ENCODE measurements at regions of chr7 and their contacts with region 1.

Region 1: DNA sequence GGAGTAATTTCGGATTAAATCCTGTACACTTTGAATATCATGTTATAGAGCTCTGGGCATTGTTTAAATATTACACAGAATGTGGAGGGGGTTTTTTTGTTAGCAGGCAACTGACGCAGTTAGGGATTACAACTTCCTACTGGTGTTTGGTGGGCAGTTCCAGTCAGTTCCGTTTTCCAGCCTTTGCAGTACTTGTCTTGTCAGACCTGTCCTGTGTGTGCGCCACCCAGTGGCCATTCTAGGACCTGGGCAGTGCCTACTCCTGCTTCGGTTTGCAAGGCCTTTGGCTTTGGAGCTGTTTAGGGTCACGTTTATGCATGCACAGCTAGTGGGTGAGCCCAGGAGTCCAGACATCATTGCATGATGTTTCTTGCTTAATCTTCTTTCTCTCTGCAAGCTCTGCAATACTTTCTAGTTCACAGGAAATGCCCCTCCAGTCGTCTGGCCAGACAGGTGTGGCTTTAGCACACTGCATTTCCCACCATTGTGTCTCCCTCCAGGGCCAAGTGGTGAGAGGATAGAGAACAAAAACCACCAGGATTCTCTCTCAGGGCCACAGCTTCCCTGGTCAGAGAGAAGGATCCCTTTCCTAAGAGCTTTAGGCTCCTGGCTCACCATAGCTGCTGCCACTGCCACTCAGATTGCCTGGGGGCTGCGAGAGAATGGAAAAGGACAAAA is 96.5 kb upstream of the TARP start:
- DNase-seq: peak; percentile 85 to 93
- H3K4me3 ChIP-seq: no peak overlapping the region
- H3K27ac ChIP-seq: no peak overlapping the region
- H3K4me1 ChIP-seq: peaks cover 0 to 6% (median under 1%) of the 10 kb centered on the region in 4 experiments; a peak in 2 of 7 replicates
- H3K27me3 ChIP-seq: no peaks in the 10 kb centered on the region
- CTCF ChIP-seq: peak; percentile 93 to 100 (median 95)
- EP300 ChIP-seq: no peak
- POLR2A ChIP-seq: no peak
- RAD21 ChIP-seq: peak; percentile 28 to 43; a peak in 3 of 4 replicates

Region 2: DNA sequence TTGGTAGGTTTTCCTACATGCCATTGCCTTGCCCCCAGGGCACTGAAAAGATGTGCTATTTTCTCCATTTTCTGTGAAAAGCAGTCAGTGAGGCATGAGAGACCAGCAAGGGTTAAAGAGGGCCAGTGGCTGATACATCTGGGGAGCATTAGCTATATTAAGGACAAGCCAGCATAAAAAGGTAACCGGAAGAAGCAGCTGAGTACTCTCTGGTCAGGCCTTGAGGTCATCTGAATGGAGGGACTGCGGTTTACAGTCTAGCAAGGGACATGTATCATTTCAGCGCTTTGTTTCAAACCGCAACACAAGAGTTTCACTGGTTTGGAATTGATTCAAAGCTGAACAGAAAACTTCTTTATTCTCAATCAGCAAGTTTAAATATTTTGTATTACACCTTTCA is 329.1 kb before region 1 on chr7:
- CTCF ChIA-PET with region 1: no interaction called
- POLR2A ChIA-PET with region 1: no interaction called
- DNase-seq: no peak
- H3K4me3 ChIP-seq: no peak overlapping the region
- H3K27ac ChIP-seq: no peak overlapping the region
- H3K4me1 ChIP-seq: no peaks in the 10 kb centered on the region
- H3K27me3 ChIP-seq: no peaks in the 10 kb centered on the region
- CTCF ChIP-seq: no peak
- EP300 ChIP-seq: no peak
- POLR2A ChIP-seq: no peak
- RAD21 ChIP-seq: no peak

Region 3: DNA sequence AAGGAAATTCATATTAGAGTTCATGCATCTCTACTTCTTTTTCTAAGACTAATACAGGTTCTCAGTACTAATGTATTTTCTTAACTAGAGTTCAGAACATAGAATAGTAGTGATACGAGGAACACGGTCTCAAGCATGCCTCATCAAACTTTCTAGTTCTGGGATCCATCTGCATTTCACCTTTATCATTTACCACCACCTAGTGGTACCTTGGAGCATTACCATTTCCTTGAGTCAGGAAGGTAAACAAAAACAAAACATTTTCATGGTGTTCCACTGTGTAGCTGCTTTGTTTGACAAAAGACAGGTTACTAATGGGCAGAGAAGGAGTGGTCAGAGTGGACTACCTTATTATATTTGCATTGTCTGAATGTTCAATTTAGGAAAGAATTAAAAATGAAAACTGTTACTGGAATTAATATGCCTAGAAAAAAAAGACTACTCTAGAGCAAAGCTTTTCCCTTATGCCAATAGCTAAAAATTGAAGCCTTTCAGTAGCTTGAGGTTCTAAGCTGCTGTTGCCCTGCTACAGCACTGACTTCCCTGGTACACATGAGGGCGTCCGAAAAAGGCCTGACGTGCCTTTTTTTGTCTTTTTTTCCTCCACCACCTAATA is 147.4 kb before region 1 on chr7:
- CTCF ChIA-PET with region 1: interaction called, 30 read pairs
- POLR2A ChIA-PET with region 1: no interaction called
- DNase-seq: no peak
- H3K4me3 ChIP-seq: no peak overlapping the region
- H3K27ac ChIP-seq: no peak overlapping the region
- H3K4me1 ChIP-seq: no peaks in the 10 kb centered on the region
- H3K27me3 ChIP-seq: no peaks in the 10 kb centered on the region
- CTCF ChIP-seq: peak in 2 of 3 experiments; percentile 77 to 80; a peak in 3 of 4 replicates
- EP300 ChIP-seq: no peak
- POLR2A ChIP-seq: no peak
- RAD21 ChIP-seq: peak; percentile 87 to 88

Region 4: GRCh38 chr7:38248069-38248567 is 121.8 kb before region 1 on chr7:
- CTCF ChIA-PET with region 1: no interaction called
- POLR2A ChIA-PET with region 1: no interaction called
- DNase-seq: no peak
- H3K4me3 ChIP-seq: no peak overlapping the region
- H3K27ac ChIP-seq: no peak overlapping the region
- H3K4me1 ChIP-seq: no peaks in the 10 kb centered on the region
- H3K27me3 ChIP-seq: peaks cover 0 to 1% (median 0%) of the 10 kb centered on the region in 4 experiments; a peak in 1 of 7 replicates
- CTCF ChIP-seq: no peak
- EP300 ChIP-seq: no peak
- POLR2A ChIP-seq: no peak
- RAD21 ChIP-seq: no peak

Region 5: GRCh38 chr7:38335492-38336147 is 34.3 kb before region 1 on chr7:
- CTCF ChIA-PET with region 1: interaction called, 41 read pairs
- POLR2A ChIA-PET with region 1: no interaction called
- DNase-seq: peak; percentile 83 to 91
- H3K4me3 ChIP-seq: no peak overlapping the region
- H3K27ac ChIP-seq: no peak overlapping the region
- H3K4me1 ChIP-seq: peaks cover 0 to 12% (median 7%) of the 10 kb centered on the region in 4 experiments; a peak in 5 of 7 replicates
- H3K27me3 ChIP-seq: no peaks in the 10 kb centered on the region
- CTCF ChIP-seq: peak; percentile 96 to 100 (median 99)
- EP300 ChIP-seq: peak in 1 of 2 experiments; percentile 43; a peak in 1 of 3 replicates
- POLR2A ChIP-seq: peak in 1 of 2 experiments; percentile 34; a peak in 1 of 3 replicates
- RAD21 ChIP-seq: peak; percentile 69 to 83

Region 6: GRCh38 chr7:38398725-38399321 is 28.9 kb after region 1 on chr7:
- CTCF ChIA-PET with region 1: interaction called, 15 read pairs
- POLR2A ChIA-PET with region 1: no interaction called
- DNase-seq: peak in 1 of 2 experiments; percentile 59
- H3K4me3 ChIP-seq: no peak overlapping the region
- H3K27ac ChIP-seq: no peak overlapping the region
- H3K4me1 ChIP-seq: no peaks in the 10 kb centered on the region
- H3K27me3 ChIP-seq: no peaks in the 10 kb centered on the region
- CTCF ChIP-seq: peak; percentile 65 to 83 (median 77)
- EP300 ChIP-seq: no peak
- POLR2A ChIP-seq: no peak
- RAD21 ChIP-seq: peak; percentile 74 to 77

Measured in H1 (cell line).